CD8-positive, alpha-beta T cell (primary cell): ENCODE measurements at regions of chr13 and their contacts with region 1.

Region 1: GRCh38 chr13:24228852-24229458 is 68.4 kb downstream of the SPATA13 start:
- DNase-seq: peak in 5 of 9 experiments; percentile 34 to 80 (median 49)
- ATAC-seq: peak; percentile 51
- H3K4me3 ChIP-seq: no peak overlapping the region
- H3K4me3 Mint-ChIP-seq: no peak overlapping the region
- H3K27ac ChIP-seq: no peak overlapping the region
- H3K27ac Mint-ChIP-seq: no peak overlapping the region
- H3K4me1 ChIP-seq: peaks cover 23% of the 10 kb centered on the region
- H3K4me1 Mint-ChIP-seq: peaks cover 51% of the 10 kb centered on the region
- H3K27me3 ChIP-seq: no peaks in the 10 kb centered on the region
- H3K27me3 Mint-ChIP-seq: no peaks in the 10 kb centered on the region
- CTCF ChIP-seq: peak; percentile 93

Region 2: DNA sequence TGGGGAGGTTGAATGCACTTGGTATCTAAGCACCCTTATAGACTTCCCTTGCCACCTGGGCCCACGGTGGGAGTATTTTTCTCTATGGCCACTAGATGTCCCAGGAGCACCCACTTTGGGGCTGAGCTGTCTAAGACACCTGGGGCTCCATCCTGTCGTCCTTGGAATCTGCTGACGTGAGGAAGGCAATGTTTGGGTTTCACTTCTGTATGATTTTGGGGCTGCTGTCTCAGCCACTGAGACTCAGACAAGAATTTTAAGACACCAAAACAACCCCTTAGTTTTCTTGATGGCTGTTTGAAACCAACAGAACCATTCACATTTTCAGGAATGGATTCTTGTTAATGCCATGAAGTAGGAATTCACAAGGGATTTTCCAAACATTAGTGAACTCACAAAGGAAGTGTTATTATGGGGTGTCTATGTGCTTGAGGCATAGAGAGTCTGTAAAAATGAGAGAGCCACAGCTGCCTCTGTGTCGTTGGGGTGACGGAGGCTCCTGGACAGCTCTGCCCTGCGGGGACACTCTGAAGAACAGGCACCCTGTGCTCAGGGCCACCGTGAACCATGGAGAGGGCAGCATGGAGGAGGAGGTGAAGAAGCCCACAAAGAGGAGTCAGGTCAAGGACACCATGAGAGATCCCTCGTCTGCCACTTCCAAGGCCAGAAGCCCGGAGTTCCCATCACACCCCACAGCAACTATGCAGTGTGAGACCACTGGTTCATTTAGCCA is 175.3 kb before region 1 on chr13:
- CTCF ChIA-PET with region 1: interaction called, 59 read pairs
- POLR2A ChIA-PET with region 1: no interaction called
- intact Hi-C with region 1: no loop called
- DNase-seq: peak; percentile 22 to 80 (median 62)
- ATAC-seq: peak; percentile 99
- H3K4me3 ChIP-seq: no peak overlapping the region
- H3K4me3 Mint-ChIP-seq: no peak overlapping the region
- H3K27ac ChIP-seq: no peak overlapping the region
- H3K27ac Mint-ChIP-seq: no peak overlapping the region
- H3K4me1 ChIP-seq: no peaks in the 10 kb centered on the region
- H3K4me1 Mint-ChIP-seq: peaks cover 8% of the 10 kb centered on the region
- H3K27me3 ChIP-seq: no peaks in the 10 kb centered on the region
- H3K27me3 Mint-ChIP-seq: no peaks in the 10 kb centered on the region
- CTCF ChIP-seq: peak; percentile 61

Region 3: GRCh38 chr13:24124789-24125476 is 104.0 kb before region 1 on chr13:
- CTCF ChIA-PET with region 1: no interaction called
- POLR2A ChIA-PET with region 1: no interaction called
- intact Hi-C with region 1: no loop called
- DNase-seq: no peak
- ATAC-seq: no peak
- H3K4me3 ChIP-seq: no peak overlapping the region
- H3K4me3 Mint-ChIP-seq: no peak overlapping the region
- H3K27ac ChIP-seq: no peak overlapping the region
- H3K27ac Mint-ChIP-seq: no peak overlapping the region
- H3K4me1 ChIP-seq: no peaks in the 10 kb centered on the region
- H3K4me1 Mint-ChIP-seq: peaks cover 6% of the 10 kb centered on the region
- H3K27me3 ChIP-seq: no peaks in the 10 kb centered on the region
- H3K27me3 Mint-ChIP-seq: no peaks in the 10 kb centered on the region
- CTCF ChIP-seq: no peak

Region 4: DNA sequence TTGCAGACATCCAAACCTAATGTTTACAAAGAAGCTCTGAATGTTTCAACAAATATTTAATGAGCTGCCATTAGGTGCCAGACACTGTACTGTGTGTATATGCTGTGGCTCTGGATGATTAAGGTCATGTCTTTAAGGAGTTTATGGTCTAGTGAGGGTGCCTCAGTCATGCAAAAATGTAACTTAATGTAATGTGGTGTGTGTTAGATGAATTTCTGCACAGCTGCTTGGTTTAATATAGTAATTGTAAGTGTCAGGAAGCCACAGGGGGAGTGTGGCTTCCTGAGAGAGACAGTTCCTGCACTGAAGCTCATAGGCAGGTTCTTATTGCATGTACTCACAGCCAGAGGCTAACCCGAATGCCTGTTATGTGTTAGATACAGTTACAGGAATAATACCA is 25.1 kb before region 1 on chr13:
- CTCF ChIA-PET with region 1: interaction called, 11 read pairs
- POLR2A ChIA-PET with region 1: interaction called, 4 read pairs
- intact Hi-C with region 1: no loop called
- DNase-seq: peak in 2 of 9 experiments; percentile 43 to 62
- ATAC-seq: peak; percentile 94
- H3K4me3 ChIP-seq: no peak overlapping the region
- H3K4me3 Mint-ChIP-seq: peak overlapping the region; percentile 72
- H3K27ac ChIP-seq: no peak overlapping the region
- H3K27ac Mint-ChIP-seq: peak overlapping the region; percentile 56
- H3K4me1 ChIP-seq: peaks cover 23% of the 10 kb centered on the region
- H3K4me1 Mint-ChIP-seq: peaks cover 31% of the 10 kb centered on the region
- H3K27me3 ChIP-seq: no peaks in the 10 kb centered on the region
- H3K27me3 Mint-ChIP-seq: no peaks in the 10 kb centered on the region
- CTCF ChIP-seq: no peak

Region 5: DNA sequence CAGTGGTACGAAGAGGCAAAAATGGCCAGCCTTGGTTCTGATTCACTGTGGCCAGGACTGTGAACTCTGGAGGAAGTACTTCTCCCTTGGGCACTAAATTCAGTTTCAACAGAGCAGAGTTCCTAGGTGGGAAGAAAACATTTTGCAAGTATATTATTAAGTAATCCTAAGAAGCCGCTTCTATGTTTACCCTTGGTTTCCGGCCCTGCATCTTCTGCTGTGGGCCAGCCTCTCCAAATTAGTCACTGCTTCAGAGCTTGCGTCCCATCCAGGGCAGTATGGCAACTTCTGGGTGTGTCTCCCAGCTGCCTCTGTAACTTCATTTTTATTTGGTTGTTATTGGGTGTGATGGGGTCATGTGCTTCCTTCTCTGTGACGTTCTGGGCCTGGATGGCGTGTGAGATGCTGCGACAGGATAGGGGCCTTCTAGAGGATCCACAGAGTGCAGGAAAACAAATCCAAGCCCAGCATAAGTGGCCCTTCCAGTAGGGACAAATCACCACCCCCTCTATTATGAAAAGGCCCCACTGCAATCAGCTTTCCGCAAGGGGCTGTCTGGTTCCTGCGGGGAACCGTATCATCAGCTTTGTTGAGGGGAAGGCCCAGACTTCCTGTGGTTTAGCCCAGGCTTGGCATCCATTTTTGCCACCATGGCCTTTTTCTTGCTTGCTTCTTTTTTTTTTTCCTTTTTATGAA is 25.3 kb after region 1 on chr13:
- CTCF ChIA-PET with region 1: interaction called, 8 read pairs
- POLR2A ChIA-PET with region 1: interaction called, 9 read pairs
- intact Hi-C with region 1: loop called in 1 of 2 experiments (anchors 2 kb)
- DNase-seq: peak in 8 of 9 experiments; percentile 44 to 91 (median 69)
- ATAC-seq: peak; percentile 58
- H3K4me3 ChIP-seq: peak overlapping the region; percentile 73 to 94
- H3K4me3 Mint-ChIP-seq: peak overlapping the region; percentile 91
- H3K27ac ChIP-seq: peak overlapping the region; percentile 77 to 84
- H3K27ac Mint-ChIP-seq: peak overlapping the region; percentile 98
- H3K4me1 ChIP-seq: peaks cover 85% of the 10 kb centered on the region
- H3K4me1 Mint-ChIP-seq: peaks cover 94% of the 10 kb centered on the region
- H3K27me3 ChIP-seq: no peaks in the 10 kb centered on the region
- H3K27me3 Mint-ChIP-seq: no peaks in the 10 kb centered on the region
- CTCF ChIP-seq: no peak

Region 6: DNA sequence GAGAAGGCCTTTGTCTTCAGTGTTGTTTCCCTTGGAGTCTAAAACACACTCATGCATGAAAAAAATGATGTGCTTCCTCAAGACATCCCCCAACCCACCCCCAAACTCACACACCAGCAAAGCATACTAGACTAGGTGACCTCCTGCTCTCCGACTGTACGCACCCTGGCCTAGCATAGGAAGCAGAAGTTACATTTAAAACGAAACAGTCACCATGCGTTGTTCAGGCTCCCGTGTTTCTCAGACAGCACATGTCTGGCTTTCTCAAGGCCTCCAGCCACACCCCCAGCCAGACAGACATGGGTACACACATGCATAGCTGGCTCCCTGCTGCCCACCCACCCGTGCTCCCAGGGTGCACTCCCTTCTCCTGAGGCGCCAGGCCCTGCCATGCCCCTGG is 51.8 kb after region 1 on chr13:
- CTCF ChIA-PET with region 1: interaction called, 14 read pairs
- POLR2A ChIA-PET with region 1: interaction called, 4 read pairs
- intact Hi-C with region 1: no loop called
- DNase-seq: no peak
- ATAC-seq: no peak
- H3K4me3 ChIP-seq: no peak overlapping the region
- H3K4me3 Mint-ChIP-seq: no peak overlapping the region
- H3K27ac ChIP-seq: peak overlapping the region in 1 of 2 experiments; percentile 22
- H3K27ac Mint-ChIP-seq: peak overlapping the region; percentile 81
- H3K4me1 ChIP-seq: peaks cover 56% of the 10 kb centered on the region
- H3K4me1 Mint-ChIP-seq: peaks cover 74% of the 10 kb centered on the region
- H3K27me3 ChIP-seq: no peaks in the 10 kb centered on the region
- H3K27me3 Mint-ChIP-seq: no peaks in the 10 kb centered on the region
- CTCF ChIP-seq: no peak